Activated naive CD4-positive, alpha-beta T cell treated with anti-CD3 and anti-CD28 coated beads for 36 hours (primary cell): ENCODE measurements at regions of chr5 and their contacts with region 1.

Region 1: DNA sequence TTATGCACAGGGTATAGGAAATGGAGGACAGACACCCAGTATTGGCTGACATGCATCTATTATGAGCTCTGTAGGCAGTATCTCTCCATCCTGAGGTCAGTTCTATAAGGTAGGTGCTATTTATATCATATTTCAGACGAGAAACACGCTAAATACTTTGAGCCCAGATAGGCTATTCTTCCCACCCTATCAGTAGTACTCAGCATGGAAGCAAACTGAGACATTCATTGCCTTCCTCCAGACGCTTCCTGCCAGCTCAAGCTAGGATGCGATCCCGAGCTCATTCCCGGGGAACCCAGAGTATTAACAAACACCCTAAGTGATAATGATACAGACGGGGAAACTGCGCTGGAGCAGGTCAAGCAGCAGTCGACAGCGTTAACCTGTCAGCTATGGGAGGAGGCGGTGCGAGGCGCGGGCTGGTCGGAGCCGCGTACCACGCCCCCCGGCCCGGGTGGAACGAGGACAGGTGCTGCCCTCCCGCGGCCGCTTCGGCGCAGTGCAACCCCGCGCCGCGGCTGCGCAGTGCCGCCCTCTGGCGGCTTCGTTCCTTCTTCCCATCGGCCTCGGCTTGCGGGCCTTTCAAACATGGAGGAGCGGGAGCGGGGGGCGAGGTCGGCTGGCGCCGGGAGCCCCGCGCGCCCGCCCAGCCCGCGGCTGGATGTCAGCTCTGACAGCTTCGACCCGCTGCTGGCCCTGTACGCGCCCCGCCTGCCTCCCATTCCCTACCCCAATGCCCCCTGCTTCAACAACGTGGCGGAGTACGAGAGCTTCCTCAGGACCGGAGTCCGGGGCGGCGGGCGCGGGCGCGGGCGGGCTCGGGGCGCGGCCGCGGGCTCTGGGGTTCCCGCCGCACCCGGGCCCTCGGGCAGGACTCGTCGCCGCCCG is at the start of gene LSM11:
- DNase-seq: peak; percentile 89
- H3K4me3 Mint-ChIP-seq: peak within 1 kb of the TSS; percentile 92
- H3K27ac Mint-ChIP-seq: peak within 1 kb of the TSS; percentile 71
- H3K4me1 Mint-ChIP-seq: peaks cover 32% of the 10 kb centered on the region
- H3K27me3 Mint-ChIP-seq: no peaks in the 10 kb centered on the region
- total RNA-seq, gene LSM11: 8.2 to 8.8 TPM

Region 2: GRCh38 chr5:157342822-157343402 is 400.5 kb before region 1 on chr5:
- CTCF ChIA-PET with region 1: interaction called, 8 read pairs
- intact Hi-C with region 1: loop called (anchors 5 kb)
- DNase-seq: peak; percentile 51
- H3K4me3 Mint-ChIP-seq: no peak overlapping the region
- H3K27ac Mint-ChIP-seq: no peak overlapping the region
- H3K4me1 Mint-ChIP-seq: peaks cover 38% of the 10 kb centered on the region
- H3K27me3 Mint-ChIP-seq: no peaks in the 10 kb centered on the region

Region 3: DNA sequence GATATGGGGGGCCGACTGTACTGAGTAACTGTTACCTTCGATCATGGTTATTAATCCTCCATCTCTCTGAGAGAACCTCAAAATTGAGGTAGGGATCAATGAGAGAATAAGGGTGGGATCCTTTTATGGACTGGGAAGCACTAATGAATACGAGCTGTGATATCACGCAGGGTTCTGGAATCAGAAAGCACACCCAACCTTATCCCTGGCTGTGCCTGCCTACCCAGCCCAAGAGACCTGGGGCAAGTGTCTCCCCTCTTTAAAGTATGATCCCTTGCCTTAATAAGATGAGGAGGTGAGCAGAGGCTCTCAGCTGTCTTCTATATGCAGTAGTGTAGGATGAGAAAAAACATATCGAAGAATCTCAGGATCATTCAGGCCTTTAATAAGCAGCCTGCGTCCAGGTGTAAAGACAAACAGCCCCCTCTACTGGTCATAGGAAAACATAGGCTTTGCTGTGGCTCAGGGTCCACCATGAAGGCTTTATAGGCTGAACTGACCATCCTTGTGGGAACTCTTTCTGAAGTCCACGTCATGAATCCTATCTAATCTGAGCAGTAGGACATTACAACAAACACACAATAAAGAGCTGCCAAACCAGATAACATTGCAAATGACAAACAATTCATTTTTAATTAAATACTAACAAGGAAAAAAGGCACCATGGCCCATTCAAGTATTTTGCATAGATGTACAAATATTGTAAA is 266.6 kb before region 1 on chr5:
- CTCF ChIA-PET with region 1: interaction called, 3 read pairs
- intact Hi-C with region 1: loop called (anchors 1 kb)
- DNase-seq: peak; percentile 59
- H3K4me3 Mint-ChIP-seq: no peak overlapping the region
- H3K27ac Mint-ChIP-seq: no peak overlapping the region
- H3K4me1 Mint-ChIP-seq: no peaks in the 10 kb centered on the region
- H3K27me3 Mint-ChIP-seq: no peaks in the 10 kb centered on the region

Region 4: GRCh38 chr5:157670662-157671591 is 72.5 kb before region 1 on chr5 and contains the start of gene C5orf52:
- CTCF ChIA-PET with region 1: interaction called, 58 read pairs
- intact Hi-C with region 1: loop called (anchors 1 kb)
- DNase-seq: peak; percentile 31
- H3K4me3 Mint-ChIP-seq: peak within 1 kb of the TSS; percentile 73
- H3K27ac Mint-ChIP-seq: peak within 1 kb of the TSS; percentile 10
- H3K4me1 Mint-ChIP-seq: peaks cover 18% of the 10 kb centered on the region
- H3K27me3 Mint-ChIP-seq: peaks cover 35% of the 10 kb centered on the region
- total RNA-seq, gene C5orf52: not detected

Region 5: GRCh38 chr5:157731272-157732129 is 11.9 kb before region 1 on chr5 and contains the start of gene THG1L:
- CTCF ChIA-PET with region 1: interaction called, 25 read pairs
- intact Hi-C with region 1: loop called (anchors 1 kb)
- DNase-seq: peak; percentile 100
- H3K4me3 Mint-ChIP-seq: peak within 1 kb of the TSS; percentile 97
- H3K27ac Mint-ChIP-seq: peak within 1 kb of the TSS; percentile 95
- H3K4me1 Mint-ChIP-seq: peaks cover 25% of the 10 kb centered on the region
- H3K27me3 Mint-ChIP-seq: no peaks in the 10 kb centered on the region
- total RNA-seq, gene THG1L: 28.1 to 30.2 TPM

Region 6: GRCh38 chr5:157761690-157762621 is 18.5 kb after region 1 on chr5:
- CTCF ChIA-PET with region 1: interaction called, 26 read pairs
- intact Hi-C with region 1: no loop called
- DNase-seq: peak; percentile 35
- H3K4me3 Mint-ChIP-seq: no peak overlapping the region
- H3K27ac Mint-ChIP-seq: no peak overlapping the region
- H3K4me1 Mint-ChIP-seq: peaks cover 7% of the 10 kb centered on the region
- H3K27me3 Mint-ChIP-seq: no peaks in the 10 kb centered on the region